Esophagus muscularis mucosa (tissue), 4 donors: ENCODE measurements at regions of chr12 and their contacts with region 1.

Region 1: DNA sequence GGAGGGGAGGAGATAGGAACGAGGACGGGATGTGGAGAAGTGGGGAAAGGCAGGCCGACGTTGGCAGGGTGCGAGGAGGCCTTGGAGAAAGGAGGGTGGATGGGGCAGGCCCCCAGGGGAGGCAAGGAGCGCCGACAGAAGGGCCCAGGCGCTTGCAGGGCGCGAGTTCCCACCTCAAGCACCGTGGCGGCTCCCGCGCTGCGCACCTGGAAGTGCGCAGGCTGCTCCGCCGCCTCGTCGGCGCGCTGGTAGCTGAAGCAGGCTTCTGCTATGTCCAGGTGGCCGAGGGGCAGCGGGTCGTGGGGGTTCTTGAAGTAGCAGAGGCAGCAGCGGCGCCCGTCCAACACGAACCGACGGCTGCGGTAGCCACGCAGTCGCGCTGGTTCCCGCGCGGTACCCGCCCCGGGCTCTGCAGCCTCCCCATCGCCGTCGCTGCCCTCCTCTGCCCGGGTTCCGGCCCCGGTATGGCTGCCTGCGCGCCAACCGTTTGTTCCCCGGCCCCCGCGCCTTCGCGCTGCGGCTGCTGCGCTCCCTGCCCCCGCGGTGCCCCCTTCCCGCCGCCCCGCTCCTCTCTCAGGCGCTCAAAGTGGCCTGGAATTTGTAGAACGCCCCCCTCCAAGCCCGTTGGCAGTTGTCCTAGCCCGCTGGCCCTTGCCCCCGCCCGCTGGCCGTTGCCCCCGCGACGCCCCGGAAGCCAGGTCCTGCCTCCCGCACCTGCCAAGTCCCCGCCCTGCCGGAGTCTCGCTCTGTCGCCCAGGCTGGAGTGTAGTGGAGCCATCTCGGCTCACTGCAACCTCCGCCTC is 1.1 kb upstream of the ACTR6 start:
- DNase-seq: no peak
- H3K4me3 ChIP-seq: peak overlapping the region; percentile 80 to 91 (median 86)
- H3K27ac ChIP-seq: peak overlapping the region; percentile 82 to 93 (median 90)
- H3K4me1 ChIP-seq: peaks cover 21 to 51% (median 33%) of the 10 kb centered on the region in 4 donors
- H3K27me3 ChIP-seq: no peaks in the 10 kb centered on the region
- CTCF ChIP-seq: no peak
- EP300 ChIP-seq: no peak
- POLR2A ChIP-seq: no peak

Region 2: DNA sequence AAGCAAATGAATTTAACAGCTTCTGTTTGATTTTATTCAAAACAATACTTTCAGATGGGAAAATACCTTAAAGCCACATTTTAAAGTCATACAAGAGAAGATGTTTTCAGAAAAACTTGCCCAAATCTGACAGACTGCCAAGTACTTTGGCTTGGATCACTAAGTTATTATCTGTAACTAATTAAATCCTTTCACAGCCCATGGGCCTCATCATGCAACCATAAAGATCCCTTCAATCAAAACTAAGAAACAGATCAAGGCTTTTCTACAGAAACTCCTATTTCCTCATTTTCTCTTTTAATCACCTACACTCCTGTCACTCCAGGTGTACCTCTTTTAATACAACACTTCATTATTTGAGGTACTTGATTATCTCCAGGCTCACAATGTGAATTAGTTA is 85.0 kb before region 1 on chr12:
- intact Hi-C with region 1: no loop called
- DNase-seq: no peak
- H3K4me3 ChIP-seq: no peak overlapping the region
- H3K27ac ChIP-seq: no peak overlapping the region
- H3K4me1 ChIP-seq: peaks cover 4 to 10% (median 8%) of the 10 kb centered on the region in 4 donors
- H3K27me3 ChIP-seq: no peaks in the 10 kb centered on the region
- CTCF ChIP-seq: no peak
- EP300 ChIP-seq: no peak
- POLR2A ChIP-seq: no peak

Region 3: GRCh38 chr12:100145643-100146042 is 53.9 kb before region 1 on chr12:
- intact Hi-C with region 1: loop called (anchors 5 kb)
- DNase-seq: no peak
- H3K4me3 ChIP-seq: no peak overlapping the region
- H3K27ac ChIP-seq: no peak overlapping the region
- H3K4me1 ChIP-seq: peaks cover 12 to 16% (median 15%) of the 10 kb centered on the region in 4 donors
- H3K27me3 ChIP-seq: no peaks in the 10 kb centered on the region
- CTCF ChIP-seq: no peak
- EP300 ChIP-seq: no peak
- POLR2A ChIP-seq: no peak